Dorsolateral prefrontal cortex (tissue), 120 donors: ENCODE measurements at regions of chr7 and their contacts with region 1.

Region 1: DNA sequence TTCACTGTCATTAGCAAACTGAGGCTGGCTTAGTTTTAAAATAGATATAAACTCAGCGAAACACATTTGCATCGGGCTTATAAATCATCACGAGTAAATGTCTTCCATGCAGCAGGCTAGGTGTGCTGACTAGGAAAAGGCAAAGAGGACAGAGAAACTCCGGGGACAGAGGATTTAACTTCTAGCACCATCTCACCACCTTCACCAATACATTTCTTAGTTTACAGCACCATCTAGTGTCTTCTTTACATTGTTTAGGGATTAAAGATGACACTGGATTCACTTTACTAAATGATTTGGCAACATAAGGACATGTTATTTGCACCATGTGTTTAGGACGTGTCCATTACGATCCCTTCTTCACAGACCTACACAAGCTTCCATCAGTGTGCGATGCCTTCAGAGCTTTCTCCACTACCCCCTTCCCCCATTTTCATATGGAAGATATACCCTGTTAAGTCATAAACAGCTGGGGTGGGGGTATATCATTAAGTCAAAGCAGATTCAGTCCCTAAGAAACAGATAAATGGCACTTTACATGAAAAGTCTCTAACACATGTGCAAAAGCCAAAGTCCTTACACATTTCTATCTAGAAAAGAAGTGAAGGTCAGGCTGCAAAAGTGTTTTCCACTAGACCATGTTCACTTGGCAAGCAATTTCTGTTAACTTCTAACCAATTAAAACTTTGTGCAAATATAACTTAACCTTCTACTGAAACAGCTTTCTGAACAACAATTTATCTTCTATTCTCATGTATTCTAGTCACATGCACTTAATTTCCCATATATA is 103.3 kb downstream of the GRB10 start:
- DNase-seq: no peak
- H3K4me3 ChIP-seq: no peak overlapping the region
- H3K27ac ChIP-seq: peak overlapping the region in 40 of 59 donors; percentile 1 to 95 (median 80)
- H3K27me3 ChIP-seq: no peaks in the 10 kb centered on the region
- CTCF ChIP-seq: peak; percentile 35 to 88 (median 66)

Region 2: DNA sequence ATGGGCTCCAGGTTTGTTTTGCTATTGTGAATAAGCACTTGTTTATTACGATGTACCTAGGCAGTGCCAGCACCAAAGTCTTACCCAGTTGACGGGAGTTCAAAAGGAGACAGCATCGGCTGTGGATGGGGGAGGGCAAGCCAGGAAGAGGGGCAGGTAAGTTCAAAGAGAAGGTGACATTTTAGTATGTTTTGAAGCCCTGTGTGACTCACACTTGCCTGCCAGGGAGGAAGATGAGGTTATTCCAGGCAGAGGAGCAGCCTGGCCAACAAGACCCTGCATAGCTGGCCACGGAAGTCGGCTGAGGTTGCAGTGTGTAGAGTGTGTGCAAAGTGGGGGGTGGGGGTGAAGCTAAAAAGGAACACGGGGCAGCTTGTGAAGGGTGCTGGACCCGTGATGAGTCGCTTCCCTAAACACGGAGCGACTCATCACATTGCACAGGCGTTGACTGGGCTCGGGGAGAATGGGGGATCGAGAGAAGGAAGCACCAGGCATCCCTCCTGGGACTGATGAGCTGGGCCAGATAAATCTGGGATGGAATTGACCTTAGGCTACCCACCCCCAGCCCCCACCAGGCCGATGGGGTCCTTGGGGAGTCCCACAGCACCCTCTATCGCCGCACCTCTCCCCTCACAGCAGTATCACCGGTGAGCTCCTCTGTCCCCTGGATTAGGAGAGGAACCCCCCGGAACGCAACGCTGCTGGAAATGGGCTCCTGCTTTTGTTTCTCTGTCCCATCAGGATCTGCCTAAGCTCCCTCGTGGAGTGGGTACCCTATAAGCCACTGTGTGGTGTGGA is 472.8 kb before region 1 on chr7:
- intact Hi-C with region 1: loop called in 1 of 2 experiments (anchors 5 kb)
- DNase-seq: no peak
- H3K4me3 ChIP-seq: no peak overlapping the region
- H3K27ac ChIP-seq: no peak overlapping the region
- H3K27me3 ChIP-seq: peaks cover 0 to 5% (median 0%) of the 10 kb centered on the region in 45 donors
- CTCF ChIP-seq: no peak

Region 3: GRCh38 chr7:50335795-50336754 is 343.3 kb before region 1 on chr7:
- intact Hi-C with region 1: no loop called
- DNase-seq: no peak
- H3K4me3 ChIP-seq: no peak overlapping the region
- H3K27ac ChIP-seq: no peak overlapping the region
- H3K27me3 ChIP-seq: peaks cover 0 to 6% (median 0%) of the 10 kb centered on the region in 45 donors
- CTCF ChIP-seq: no peak

Region 4: GRCh38 chr7:50467817-50468610 is 211.4 kb before region 1 on chr7:
- intact Hi-C with region 1: loop called (anchors 1 to 2 kb)
- DNase-seq: peak; percentile 73 to 87 (median 84)
- H3K4me3 ChIP-seq: peak overlapping the region in 46 of 59 donors; percentile 5 to 61 (median 32)
- H3K27ac ChIP-seq: peak overlapping the region in 5 of 59 donors; percentile 3 to 28 (median 13)
- H3K27me3 ChIP-seq: no peaks in the 10 kb centered on the region
- CTCF ChIP-seq: peak; percentile 75 to 97 (median 90)

Region 5: DNA sequence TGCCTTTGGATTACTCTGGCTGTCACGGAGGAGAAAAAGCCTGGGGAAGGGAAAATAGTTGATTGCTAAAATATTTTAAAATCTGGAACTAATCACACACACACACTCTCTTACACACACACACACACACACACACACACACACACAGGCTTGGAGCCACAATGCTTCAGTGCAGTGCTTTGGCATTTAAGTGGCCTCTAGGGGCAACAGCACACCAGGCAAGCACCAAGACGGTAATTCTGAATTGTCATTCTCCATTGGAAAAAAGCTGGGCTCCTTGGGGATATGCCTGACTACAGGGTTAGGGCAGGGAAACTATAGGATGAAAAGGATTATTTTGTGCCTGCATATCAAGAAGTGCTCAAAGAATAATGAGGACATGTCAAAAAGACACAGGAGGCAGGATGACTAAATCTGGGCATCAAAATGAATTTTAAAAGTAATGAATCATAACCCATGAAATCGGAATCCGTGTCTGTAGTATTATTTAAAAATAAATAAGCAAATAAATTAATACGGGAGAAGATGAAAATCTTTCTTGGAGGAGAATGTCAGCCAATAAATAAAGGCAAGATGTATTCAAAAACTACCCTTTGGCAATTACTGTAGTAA is 83.8 kb before region 1 on chr7:
- intact Hi-C with region 1: loop called in 1 of 2 experiments (anchors 10 kb)
- DNase-seq: peak in 6 of 10 donors; percentile 17 to 69 (median 38)
- H3K4me3 ChIP-seq: no peak overlapping the region
- H3K27ac ChIP-seq: peak overlapping the region in 1 of 59 donors; percentile 31
- H3K27me3 ChIP-seq: no peaks in the 10 kb centered on the region
- CTCF ChIP-seq: peak in 52 of 56 donors; percentile 13 to 66 (median 41)

Region 6: GRCh38 chr7:50641442-50642405 is 37.7 kb before region 1 on chr7:
- intact Hi-C with region 1: loop called (anchors 1 to 2 kb)
- DNase-seq: peak in 9 of 10 donors; percentile 81 to 98 (median 90)
- H3K4me3 ChIP-seq: peak overlapping the region in 51 of 59 donors; percentile 1 to 60 (median 38)
- H3K27ac ChIP-seq: peak overlapping the region in 58 of 59 donors; percentile 63 to 98 (median 92)
- H3K27me3 ChIP-seq: no peaks in the 10 kb centered on the region
- CTCF ChIP-seq: peak in 55 of 56 donors; percentile 35 to 81 (median 62)

Region 7: DNA sequence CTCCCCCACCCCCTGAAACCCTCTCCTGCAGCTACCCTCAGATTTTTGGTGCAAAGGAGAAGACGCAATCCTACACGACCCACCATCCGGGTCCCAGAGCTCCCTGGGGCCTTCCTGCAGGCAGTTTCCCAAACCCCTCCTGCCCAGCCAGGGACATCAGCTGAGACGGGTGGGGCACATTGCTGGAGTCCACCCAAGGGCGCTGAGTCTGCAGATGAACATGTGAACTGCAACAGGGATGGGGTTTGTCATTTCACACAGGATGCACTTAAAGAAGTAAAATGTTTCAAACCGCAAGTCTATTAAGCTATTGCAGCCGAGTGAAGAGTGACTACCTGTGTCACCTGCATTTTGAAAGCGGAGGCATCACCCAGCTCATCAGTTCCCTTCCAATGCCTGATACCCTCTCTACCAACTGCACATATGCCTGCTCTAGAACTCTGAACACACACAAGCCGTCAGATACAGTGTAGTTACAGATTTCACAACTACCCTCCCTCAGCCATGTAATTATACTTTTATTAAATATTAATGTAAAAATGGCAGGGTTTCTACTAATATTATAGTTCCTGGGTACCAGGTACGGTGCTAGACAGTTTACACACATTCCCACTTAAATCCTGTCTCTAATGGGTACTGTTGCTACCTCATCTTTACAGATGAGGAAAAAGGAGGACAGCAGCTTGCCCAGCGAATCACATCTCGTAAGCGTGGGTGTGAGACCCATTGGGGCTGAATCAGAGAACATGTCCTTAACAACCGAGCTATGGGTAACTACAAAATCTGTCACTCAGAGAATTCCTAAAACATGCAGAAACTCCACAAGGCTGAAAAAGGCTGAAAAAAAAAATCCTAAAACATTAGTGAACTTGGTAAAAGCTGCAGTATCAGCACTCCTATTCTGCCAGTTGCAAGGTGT is 32.1 kb after region 1 on chr7:
- intact Hi-C with region 1: no loop called
- DNase-seq: no peak
- H3K4me3 ChIP-seq: no peak overlapping the region
- H3K27ac ChIP-seq: peak overlapping the region in 2 of 59 donors; percentile 10 to 31
- H3K27me3 ChIP-seq: no peaks in the 10 kb centered on the region
- CTCF ChIP-seq: no peak